ENCODE measurements at regions of chr19 and their contacts with region 1.

Region 1: DNA sequence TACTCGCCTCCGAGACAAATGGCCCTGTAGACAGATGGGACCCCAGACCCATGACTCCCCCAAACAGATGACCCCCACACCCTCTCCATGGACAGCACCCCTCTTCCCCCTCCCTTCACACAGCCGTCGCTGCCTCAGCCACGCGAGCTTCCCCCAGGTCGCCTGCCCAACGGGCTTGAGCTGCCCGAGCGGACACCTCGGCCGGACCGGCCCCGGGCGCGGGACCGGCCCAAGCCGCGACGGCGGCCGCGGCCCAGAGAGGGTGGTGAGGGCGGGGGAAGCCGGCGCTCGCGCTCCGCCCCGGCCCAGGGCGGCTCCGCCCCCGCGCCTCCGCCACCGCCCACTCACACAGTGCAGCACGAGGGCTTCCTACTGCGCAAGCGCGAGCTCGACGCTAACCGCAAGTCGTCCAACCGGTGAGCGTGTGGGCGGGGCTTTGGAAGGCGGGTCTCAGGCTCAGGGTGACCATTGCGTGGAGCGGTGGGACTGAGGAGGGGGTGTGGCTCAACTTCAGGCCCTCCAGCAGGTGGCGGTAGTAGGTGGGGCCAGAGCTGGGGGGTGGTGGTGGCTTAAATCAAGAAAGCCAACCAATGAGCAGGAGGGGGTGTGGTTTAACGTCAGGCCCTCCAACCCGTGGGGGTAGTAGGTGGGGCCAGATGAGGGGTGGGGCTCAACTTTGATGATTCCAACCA is 6.2 kb upstream of the SHKBP1 start:
- H3K4me3 ChIP-seq: peak overlapping the region; percentile 35
- H3K27ac ChIP-seq: peak overlapping the region; percentile 73
- H3K4me1 ChIP-seq: peaks cover 16% of the 10 kb centered on the region
- CTCF ChIP-seq: peak; percentile 99

Region 2: DNA sequence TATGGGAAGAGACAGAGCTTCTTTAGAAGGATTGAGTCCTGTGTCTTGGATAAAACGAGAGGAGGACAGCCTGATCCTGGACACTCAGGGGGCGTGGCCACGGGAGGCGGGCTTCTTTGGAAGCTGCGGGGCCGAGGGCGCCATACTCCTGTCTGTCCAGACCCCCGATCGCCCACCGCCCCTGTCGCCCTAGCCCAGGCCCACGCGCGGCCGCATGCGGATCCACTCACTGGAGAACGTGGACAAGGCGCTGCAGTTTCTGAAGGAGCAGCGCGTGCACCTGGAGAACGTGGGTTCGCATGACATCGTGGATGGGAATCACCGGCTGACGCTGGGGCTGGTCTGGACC is 80.6 kb before region 1 on chr19:
- CTCF ChIA-PET with region 1: no interaction called
- POLR2A ChIA-PET with region 1: no interaction called
- H3K4me3 ChIP-seq: no peak overlapping the region
- H3K27ac ChIP-seq: no peak overlapping the region
- H3K4me1 ChIP-seq: no peaks in the 10 kb centered on the region
- CTCF ChIP-seq: no peak

Region 3: DNA sequence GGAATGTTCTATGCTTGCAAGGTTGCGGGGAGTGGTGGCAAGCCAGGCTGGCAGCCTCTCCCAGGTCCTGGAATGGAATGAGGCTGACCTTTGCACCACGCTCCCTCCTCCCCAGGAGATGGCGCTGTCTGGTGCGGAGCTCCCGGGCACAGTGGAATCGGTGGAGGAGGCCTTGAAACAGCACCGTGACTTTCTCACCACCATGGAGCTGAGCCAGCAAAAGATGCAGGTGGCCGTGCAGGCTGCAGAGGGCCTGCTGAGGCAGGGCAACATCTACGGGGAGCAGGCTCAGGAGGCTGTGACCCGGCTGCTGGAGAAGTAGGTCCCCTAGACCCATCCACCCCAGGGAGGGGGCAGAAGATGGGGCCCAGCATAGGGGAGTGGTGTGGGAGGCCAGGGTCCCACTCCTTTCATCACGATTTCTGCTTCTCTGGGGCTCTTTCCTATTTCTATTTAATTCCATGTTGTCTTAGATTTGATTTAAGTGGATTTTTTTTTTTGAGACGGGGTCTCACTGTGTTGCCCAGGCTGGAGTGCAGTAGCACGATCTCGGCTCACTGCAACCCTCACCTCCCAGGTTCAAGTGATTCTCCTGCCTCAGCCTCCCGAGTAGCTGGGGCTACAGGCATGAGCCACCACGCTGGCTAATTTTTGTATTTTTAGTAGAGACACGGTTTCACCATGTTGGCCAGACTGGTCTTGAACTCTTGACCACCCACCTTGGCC is 47.0 kb before region 1 on chr19:
- CTCF ChIA-PET with region 1: interaction called, 16 read pairs
- POLR2A ChIA-PET with region 1: interaction called, 12 read pairs
- H3K4me3 ChIP-seq: no peak overlapping the region; the same call in 1 of the 2 replicates
- H3K27ac ChIP-seq: peak overlapping the region; percentile 47; the same call in 1 of the 2 replicates
- H3K4me1 ChIP-seq: peaks cover 9% of the 10 kb centered on the region
- CTCF ChIP-seq: peak; percentile 99

Region 4: DNA sequence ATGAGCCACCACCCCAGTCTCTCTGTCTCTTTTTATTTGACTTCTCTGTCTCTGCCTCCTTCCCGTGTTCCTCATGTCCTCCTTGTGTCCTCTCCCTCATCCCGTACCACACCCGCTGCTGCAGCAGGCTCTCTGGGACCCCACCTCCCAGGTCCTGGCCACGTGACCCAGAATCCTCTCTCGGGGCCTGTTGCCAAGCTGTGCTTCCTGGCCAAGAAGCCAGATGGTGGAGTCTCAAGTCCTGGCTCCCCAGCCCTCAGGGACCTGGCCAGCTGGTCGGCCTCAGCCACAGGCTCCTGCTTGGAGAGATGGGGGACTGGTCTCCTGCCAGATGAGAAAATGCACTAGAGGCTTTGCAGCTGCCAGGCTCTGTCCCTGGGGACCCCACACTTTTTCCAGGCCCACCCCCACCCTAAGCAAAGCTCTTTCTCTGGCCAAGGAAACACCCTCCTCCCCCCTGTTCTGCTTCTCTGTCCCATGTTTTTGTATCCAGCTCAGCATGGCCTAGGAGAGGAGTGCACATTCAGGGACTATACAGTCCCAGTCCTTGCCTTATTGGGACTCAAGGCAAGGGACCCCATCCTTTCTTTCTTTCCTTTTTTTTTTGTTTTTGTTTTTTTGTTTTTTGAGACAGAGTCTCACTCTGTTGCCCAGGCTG is 28.1 kb before region 1 on chr19:
- CTCF ChIA-PET with region 1: interaction called, 132 read pairs
- POLR2A ChIA-PET with region 1: interaction called, 3 read pairs
- H3K4me3 ChIP-seq: no peak overlapping the region
- H3K27ac ChIP-seq: no peak overlapping the region
- H3K4me1 ChIP-seq: peaks cover 4% of the 10 kb centered on the region; the same call in 1 of the 2 replicates
- CTCF ChIP-seq: no peak

Region 5: GRCh38 chr19:40560092-40560507 is 10.4 kb before region 1 on chr19:
- CTCF ChIA-PET with region 1: interaction called, 132 read pairs
- POLR2A ChIA-PET with region 1: interaction called, 4 read pairs
- H3K4me3 ChIP-seq: no peak overlapping the region
- H3K27ac ChIP-seq: no peak overlapping the region
- H3K4me1 ChIP-seq: no peaks in the 10 kb centered on the region
- CTCF ChIP-seq: no peak

Region 6: DNA sequence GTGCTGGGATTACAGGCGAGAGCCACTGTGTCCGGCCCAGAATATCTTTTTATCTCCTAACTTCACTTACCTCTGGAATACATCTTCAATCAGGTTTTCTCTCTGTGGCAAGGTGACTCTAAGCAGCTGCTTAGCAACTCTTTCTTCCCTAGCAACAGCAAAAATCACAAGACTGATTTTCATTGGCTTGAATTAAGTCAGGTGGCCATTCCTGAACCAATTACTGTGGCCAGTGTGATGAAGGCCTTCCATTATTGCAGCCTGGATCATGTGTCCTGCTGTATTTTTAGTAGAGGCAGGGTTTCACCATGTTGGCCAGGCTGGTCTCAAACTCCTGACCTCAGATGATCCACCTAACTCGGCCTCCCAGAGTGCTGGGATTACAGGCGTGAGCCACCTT is 21.7 kb after region 1 on chr19:
- CTCF ChIA-PET with region 1: interaction called, 20 read pairs
- POLR2A ChIA-PET with region 1: interaction called, 10 read pairs
- H3K4me3 ChIP-seq: no peak overlapping the region
- H3K27ac ChIP-seq: no peak overlapping the region
- H3K4me1 ChIP-seq: peaks cover 14% of the 10 kb centered on the region
- CTCF ChIP-seq: no peak

Measured in HEK293 (cell line).